WTC11 (cell line): ENCODE measurements at regions of chr16 and their contacts with region 1.

Region 1: DNA sequence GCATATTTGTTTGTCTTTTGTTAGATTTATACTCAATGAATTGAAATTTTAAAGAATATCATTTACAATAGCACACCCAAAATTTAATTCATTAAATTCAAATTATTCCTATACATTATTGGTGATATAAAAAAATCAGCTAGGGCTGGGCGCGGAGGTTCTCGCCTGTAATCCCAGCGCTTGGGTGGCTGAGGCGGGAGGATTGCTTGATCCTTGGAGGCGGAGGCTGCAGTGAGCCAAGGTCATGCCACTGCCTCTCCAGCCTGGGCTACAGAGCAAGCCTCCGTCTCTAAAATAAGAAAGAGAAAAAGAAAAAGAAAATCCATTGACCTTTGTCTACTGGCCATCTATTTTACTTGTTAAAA is 4.5 kb upstream of the PRDM7 start:
- DNase-seq: peak; percentile 27
- ATAC-seq: no peak
- H3K4me3 Mint-ChIP-seq: peak overlapping the region; percentile 91
- H3K27ac Mint-ChIP-seq: no peak overlapping the region
- H3K4me1 Mint-ChIP-seq: peaks cover 16% of the 10 kb centered on the region
- H3K27me3 Mint-ChIP-seq: peaks cover 66% of the 10 kb centered on the region
- CTCF ChIP-seq: no peak

Region 2: GRCh38 chr16:89981414-89981813 is 100.2 kb before region 1 on chr16:
- CTCF ChIA-PET with region 1: no interaction called
- POLR2A ChIA-PET with region 1: no interaction called
- DNase-seq: no peak
- ATAC-seq: no peak
- H3K4me3 Mint-ChIP-seq: no peak overlapping the region
- H3K27ac Mint-ChIP-seq: no peak overlapping the region
- H3K4me1 Mint-ChIP-seq: no peaks in the 10 kb centered on the region
- H3K27me3 Mint-ChIP-seq: no peaks in the 10 kb centered on the region
- CTCF ChIP-seq: no peak

Region 3: DNA sequence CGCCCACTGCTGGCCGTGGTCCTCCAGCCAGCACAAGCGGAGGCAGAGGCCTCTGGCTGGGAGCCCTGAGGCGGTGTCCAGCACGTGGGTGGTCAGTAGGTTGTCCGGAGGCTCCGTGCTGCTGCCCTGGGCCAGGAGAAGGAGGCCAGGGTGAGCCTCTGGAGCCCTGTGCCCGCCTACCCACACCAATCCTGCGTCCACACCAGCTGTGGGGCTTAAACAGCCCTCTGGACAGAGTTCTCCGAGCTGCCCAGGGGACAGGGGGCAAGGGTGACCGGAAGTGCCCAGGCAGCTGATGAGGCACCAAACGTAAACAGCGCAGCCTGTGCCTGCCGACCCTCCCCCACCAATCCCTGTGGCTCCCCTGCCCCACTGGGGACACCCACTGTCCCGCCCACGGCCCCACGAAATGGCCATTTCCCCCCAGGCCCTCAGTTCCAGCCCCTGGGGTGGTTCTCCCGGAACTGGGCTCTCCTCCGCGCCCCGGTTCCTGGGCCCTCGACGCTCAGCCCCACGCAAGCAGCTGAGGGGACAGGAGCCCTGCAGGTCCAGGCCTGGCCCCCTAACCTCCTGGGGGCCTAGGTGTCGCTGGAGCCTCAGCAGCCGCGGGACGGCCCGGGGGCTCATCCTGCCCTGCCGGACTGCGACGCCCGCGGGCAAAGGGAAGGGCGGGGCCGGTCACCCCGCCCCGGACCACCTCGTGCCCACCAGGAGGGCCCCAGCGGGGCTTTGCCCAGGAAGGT is 34.4 kb before region 1 on chr16:
- CTCF ChIA-PET with region 1: interaction called, 26 read pairs
- POLR2A ChIA-PET with region 1: no interaction called
- DNase-seq: peak; percentile 29
- ATAC-seq: peak; percentile 21
- H3K4me3 Mint-ChIP-seq: peak overlapping the region; percentile 66
- H3K27ac Mint-ChIP-seq: no peak overlapping the region
- H3K4me1 Mint-ChIP-seq: peaks cover 10% of the 10 kb centered on the region
- H3K27me3 Mint-ChIP-seq: peaks cover 15% of the 10 kb centered on the region
- CTCF ChIP-seq: no peak